CD8-positive, alpha-beta T cell (primary cell): ENCODE measurements at regions of chr2 and their contacts with region 1.

Region 1: GRCh38 chr2:146879882-146880281 is 964.9 kb upstream of the ACVR2A start:
- DNase-seq: no peak
- ATAC-seq: no peak
- H3K4me3 ChIP-seq: no peak overlapping the region
- H3K4me3 Mint-ChIP-seq: no peak overlapping the region
- H3K27ac ChIP-seq: no peak overlapping the region
- H3K27ac Mint-ChIP-seq: no peak overlapping the region
- H3K4me1 ChIP-seq: no peaks in the 10 kb centered on the region
- H3K4me1 Mint-ChIP-seq: no peaks in the 10 kb centered on the region
- H3K27me3 ChIP-seq: no peaks in the 10 kb centered on the region
- H3K27me3 Mint-ChIP-seq: no peaks in the 10 kb centered on the region
- CTCF ChIP-seq: no peak

Region 2: DNA sequence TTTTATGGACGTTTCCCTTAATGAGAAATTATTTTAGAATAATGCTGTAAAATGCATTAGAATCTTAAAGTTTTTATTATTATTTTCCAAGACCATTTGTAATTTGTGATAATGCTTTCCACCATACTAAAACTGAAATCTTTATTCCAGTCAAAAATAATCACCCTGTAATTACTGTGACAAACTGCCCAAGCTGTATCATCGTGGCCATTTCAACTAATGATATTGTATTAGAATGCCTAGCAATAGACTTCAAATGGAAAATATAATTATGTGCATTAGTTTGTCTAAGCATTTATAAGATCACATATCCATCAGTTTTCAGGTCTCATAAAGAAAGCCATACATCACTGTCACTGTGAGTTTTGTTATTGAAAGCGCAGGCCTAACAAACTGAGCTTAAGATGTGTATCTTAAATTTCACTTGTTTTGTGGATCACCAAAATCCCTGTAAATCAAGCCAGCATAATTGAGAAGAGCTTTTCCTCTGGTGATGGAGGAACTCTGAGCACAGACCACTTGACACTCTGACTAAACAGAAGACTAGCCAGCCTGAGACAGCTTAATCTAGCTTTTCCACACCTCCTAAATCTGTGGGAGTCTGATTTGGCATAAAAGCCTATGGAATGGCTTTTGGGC is 347.3 kb before region 1 on chr2:
- CTCF ChIA-PET with region 1: no interaction called
- POLR2A ChIA-PET with region 1: no interaction called
- intact Hi-C with region 1: loop called in 1 of 2 experiments (anchors 5 kb)
- DNase-seq: no peak
- ATAC-seq: no peak
- H3K4me3 ChIP-seq: no peak overlapping the region
- H3K4me3 Mint-ChIP-seq: no peak overlapping the region
- H3K27ac ChIP-seq: no peak overlapping the region
- H3K27ac Mint-ChIP-seq: no peak overlapping the region
- H3K4me1 ChIP-seq: no peaks in the 10 kb centered on the region
- H3K4me1 Mint-ChIP-seq: no peaks in the 10 kb centered on the region
- H3K27me3 ChIP-seq: no peaks in the 10 kb centered on the region
- H3K27me3 Mint-ChIP-seq: no peaks in the 10 kb centered on the region
- CTCF ChIP-seq: no peak

Region 3: DNA sequence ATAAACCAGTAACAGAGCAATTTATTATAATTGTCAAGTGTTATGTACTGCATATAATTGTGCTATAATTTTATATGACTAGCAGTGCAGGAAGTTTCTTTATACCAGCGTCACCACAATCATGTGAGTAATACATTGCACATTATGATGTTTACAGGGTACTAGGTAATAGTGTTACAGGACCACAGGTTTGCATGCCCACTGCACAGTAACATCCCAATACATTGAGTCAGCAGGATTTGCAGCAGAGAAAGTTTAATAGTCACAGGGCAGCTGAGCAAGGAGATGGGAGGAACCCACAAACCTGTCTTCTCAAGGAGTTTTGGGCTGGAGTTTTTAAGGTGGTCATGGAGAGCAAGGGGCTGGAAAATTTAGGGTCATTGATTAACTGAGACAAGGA is 78.0 kb before region 1 on chr2:
- CTCF ChIA-PET with region 1: no interaction called
- POLR2A ChIA-PET with region 1: no interaction called
- intact Hi-C with region 1: no loop called
- DNase-seq: no peak
- ATAC-seq: no peak
- H3K4me3 ChIP-seq: no peak overlapping the region
- H3K4me3 Mint-ChIP-seq: no peak overlapping the region
- H3K27ac ChIP-seq: no peak overlapping the region
- H3K27ac Mint-ChIP-seq: no peak overlapping the region
- H3K4me1 ChIP-seq: no peaks in the 10 kb centered on the region
- H3K4me1 Mint-ChIP-seq: no peaks in the 10 kb centered on the region
- H3K27me3 ChIP-seq: no peaks in the 10 kb centered on the region
- H3K27me3 Mint-ChIP-seq: no peaks in the 10 kb centered on the region
- CTCF ChIP-seq: no peak